ENCODE measurements at regions of chr9 and their contacts with region 1.

Region 1: DNA sequence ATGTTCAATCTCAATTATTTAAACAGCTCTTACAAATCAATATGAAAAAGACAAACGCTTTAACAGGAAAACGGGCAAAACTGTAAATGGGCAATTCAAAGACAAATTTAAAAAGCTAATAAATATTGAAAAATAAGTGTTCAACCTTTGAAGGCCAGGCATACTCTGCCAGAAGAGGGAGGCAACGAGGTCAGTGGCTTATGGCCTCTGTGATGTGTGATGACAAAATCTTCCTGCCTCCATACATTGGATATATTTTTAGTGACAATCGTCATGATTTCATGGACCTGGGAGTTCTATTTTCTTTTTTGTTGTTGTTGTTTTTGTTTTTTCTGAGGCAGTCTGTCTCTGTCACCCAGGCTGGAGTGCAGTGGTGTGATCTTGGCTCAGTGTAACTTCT is 131.2 kb upstream of the ERCC6L2 start:
- DNase-seq: no peak
- ATAC-seq: no peak
- H3K4me3 ChIP-seq: no peak overlapping the region
- H3K27ac ChIP-seq: no peak overlapping the region
- H3K4me1 ChIP-seq: no peaks in the 10 kb centered on the region
- H3K27me3 ChIP-seq: no peaks in the 10 kb centered on the region
- CTCF ChIP-seq: no peak

Region 2: DNA sequence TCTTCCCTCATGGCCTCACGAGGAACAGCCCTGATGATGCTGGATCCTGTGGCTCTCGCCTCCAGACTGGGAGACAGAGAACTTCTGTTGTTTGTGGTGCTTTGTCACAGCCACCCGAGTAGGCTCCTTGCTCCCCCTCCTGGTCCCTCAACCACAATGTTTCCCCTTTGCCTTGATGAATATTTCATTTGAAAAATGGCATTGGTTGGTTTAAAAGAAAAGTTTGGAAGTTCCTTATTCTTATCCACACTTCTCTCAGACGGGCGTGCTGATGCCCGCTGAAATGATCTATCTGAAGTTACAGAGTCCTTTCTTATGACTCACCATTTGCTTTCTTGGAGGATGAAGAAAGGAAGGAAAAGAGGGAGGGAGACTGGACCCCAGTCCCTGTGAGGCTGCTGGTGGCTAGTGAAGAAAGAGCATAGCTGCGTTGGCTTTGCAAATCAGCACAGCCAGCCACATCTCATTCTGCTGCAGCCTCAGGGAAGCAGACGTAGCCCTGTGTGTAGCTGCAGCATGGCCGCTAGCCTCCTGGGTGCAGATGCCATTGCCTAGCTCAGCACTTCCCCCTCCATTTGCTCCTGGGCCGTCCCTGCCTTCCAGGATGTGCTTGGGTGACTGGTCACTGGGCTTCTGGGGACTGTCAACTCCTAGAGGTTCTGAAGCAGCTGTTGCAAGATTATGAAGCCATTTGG is 317.1 kb after region 1 on chr9:
- CTCF ChIA-PET with region 1: no interaction called
- POLR2A ChIA-PET with region 1: no interaction called
- intact Hi-C with region 1: loop called (anchors 10 kb)
- DNase-seq: peak; percentile 35
- ATAC-seq: peak; percentile 55
- H3K4me3 ChIP-seq: no peak overlapping the region
- H3K27ac ChIP-seq: no peak overlapping the region
- H3K4me1 ChIP-seq: peaks cover 9% of the 10 kb centered on the region; the same call in 1 of the 2 replicates
- H3K27me3 ChIP-seq: no peaks in the 10 kb centered on the region
- CTCF ChIP-seq: peak; percentile 51; the same call in 1 of the 2 replicates

Measured in PC-3 (cell line).